ENCODE measurements at regions of chr20 and their contacts with region 1.

Region 1: GRCh38 chr20:46022411-46023147 is 6.4 kb upstream of the SLC12A5 start:
- DNase-seq: peak; percentile 83
- H3K4me3 Mint-ChIP-seq: peak overlapping the region; percentile 63
- H3K27ac Mint-ChIP-seq: no peak overlapping the region
- H3K4me1 Mint-ChIP-seq: peaks cover 8% of the 10 kb centered on the region
- H3K27me3 Mint-ChIP-seq: peaks cover 32% of the 10 kb centered on the region

Region 2: GRCh38 chr20:46174469-46175128 is 152.0 kb after region 1 on chr20:
- CTCF ChIA-PET with region 1: interaction called, 6 read pairs
- intact Hi-C with region 1: loop called (anchors 1 kb)
- DNase-seq: peak; percentile 80
- H3K4me3 Mint-ChIP-seq: no peak overlapping the region
- H3K27ac Mint-ChIP-seq: no peak overlapping the region
- H3K4me1 Mint-ChIP-seq: no peaks in the 10 kb centered on the region
- H3K27me3 Mint-ChIP-seq: peaks cover 44% of the 10 kb centered on the region

Measured in activated naive CD4-positive, alpha-beta T cell treated with anti-CD3 and anti-CD28 coated beads for 36 hours (primary cell).